CD4-positive, alpha-beta memory T cell (primary cell): ENCODE measurements at regions of chr12 and their contacts with region 1.

Region 1: GRCh38 chr12:124927201-124928094 is 13.0 kb upstream of the UBC start:
- DNase-seq: peak; percentile 90 to 94 (median 92)
- H3K4me3 ChIP-seq: peak overlapping the region; percentile 70 to 95
- H3K4me3 Mint-ChIP-seq: peak overlapping the region; percentile 88 to 97 (median 95)
- H3K27ac ChIP-seq: peak overlapping the region; percentile 57
- H3K27ac Mint-ChIP-seq: peak overlapping the region; percentile 91 to 100 (median 99)
- H3K4me1 ChIP-seq: peaks cover 21% of the 10 kb centered on the region
- H3K4me1 Mint-ChIP-seq: peaks cover 18 to 45% (median 29%) of the 10 kb centered on the region in 4 donors
- H3K27me3 ChIP-seq: no peaks in the 10 kb centered on the region
- H3K27me3 Mint-ChIP-seq: peaks cover 4 to 9% of the 10 kb centered on the region in 2 donors

Region 2: DNA sequence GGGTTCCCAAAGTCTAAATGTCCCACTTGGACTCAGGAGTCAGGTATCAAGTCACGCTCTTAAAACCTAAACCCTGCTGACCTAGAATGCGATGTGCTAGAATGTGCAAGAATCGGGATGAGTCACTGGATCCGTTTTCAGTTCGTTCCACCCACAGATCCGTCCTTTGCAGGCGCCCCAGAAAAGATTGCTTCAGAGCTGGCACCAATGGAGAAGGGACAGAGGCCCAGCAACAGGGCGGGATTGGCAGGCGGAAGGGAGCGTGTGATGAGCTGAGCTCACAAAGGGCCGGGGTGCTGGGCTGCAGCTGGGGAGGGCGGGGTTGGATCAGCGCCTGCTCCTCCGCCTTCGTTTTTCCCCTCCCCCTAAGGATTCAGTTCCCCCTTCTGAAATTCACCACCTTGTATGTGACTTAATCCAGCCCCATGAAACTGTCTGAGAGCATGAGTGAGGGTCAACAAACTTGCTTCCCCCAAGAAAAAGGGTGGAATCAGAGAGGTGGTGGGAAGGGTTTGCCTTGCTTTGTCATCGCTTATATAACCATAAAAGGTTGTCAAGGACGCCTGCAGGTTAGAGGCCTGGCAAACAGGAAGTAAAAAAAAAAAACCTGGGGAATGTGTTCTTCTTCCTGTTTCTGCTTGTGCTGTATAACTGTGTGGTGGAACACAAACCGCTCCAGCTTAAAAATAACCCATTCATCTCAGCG is 10.2 kb before region 1 on chr12:
- CTCF ChIA-PET with region 1: interaction called, 42 read pairs
- POLR2A ChIA-PET with region 1: interaction called, 836 read pairs
- intact Hi-C with region 1: loop called (anchors 1 kb)
- DNase-seq: peak; percentile 94 to 98 (median 96)
- H3K4me3 ChIP-seq: peak overlapping the region; percentile 39 to 53
- H3K4me3 Mint-ChIP-seq: peak overlapping the region; percentile 82 to 99 (median 87)
- H3K27ac ChIP-seq: peak overlapping the region; percentile 84
- H3K27ac Mint-ChIP-seq: peak overlapping the region; percentile 95 to 100 (median 97)
- H3K4me1 ChIP-seq: peaks cover 81% of the 10 kb centered on the region
- H3K4me1 Mint-ChIP-seq: peaks cover 70 to 98% (median 83%) of the 10 kb centered on the region in 4 donors
- H3K27me3 ChIP-seq: no peaks in the 10 kb centered on the region
- H3K27me3 Mint-ChIP-seq: peaks cover 2 to 9% of the 10 kb centered on the region in 2 donors

Region 3: GRCh38 chr12:124940549-124941527 is 13.4 kb after region 1 on chr12:
- CTCF ChIA-PET with region 1: interaction called, 898 read pairs
- POLR2A ChIA-PET with region 1: interaction called, 836 read pairs
- intact Hi-C with region 1: loop called (anchors 1 kb)
- DNase-seq: peak; percentile 76 to 87 (median 77)
- H3K4me3 ChIP-seq: peak overlapping the region; percentile 73 to 82
- H3K4me3 Mint-ChIP-seq: no peak overlapping the region
- H3K27ac ChIP-seq: peak overlapping the region; percentile 54
- H3K27ac Mint-ChIP-seq: peak overlapping the region in 1 of 7 donors; percentile 29
- H3K4me1 ChIP-seq: peaks cover 30% of the 10 kb centered on the region
- H3K4me1 Mint-ChIP-seq: peaks cover 0 to 9% (median 6%) of the 10 kb centered on the region in 4 donors
- H3K27me3 ChIP-seq: no peaks in the 10 kb centered on the region
- H3K27me3 Mint-ChIP-seq: no peaks in the 10 kb centered on the region